Psoas muscle (tissue), 8 donors: ENCODE measurements at regions of chr18 and their contacts with region 1.

Region 1: DNA sequence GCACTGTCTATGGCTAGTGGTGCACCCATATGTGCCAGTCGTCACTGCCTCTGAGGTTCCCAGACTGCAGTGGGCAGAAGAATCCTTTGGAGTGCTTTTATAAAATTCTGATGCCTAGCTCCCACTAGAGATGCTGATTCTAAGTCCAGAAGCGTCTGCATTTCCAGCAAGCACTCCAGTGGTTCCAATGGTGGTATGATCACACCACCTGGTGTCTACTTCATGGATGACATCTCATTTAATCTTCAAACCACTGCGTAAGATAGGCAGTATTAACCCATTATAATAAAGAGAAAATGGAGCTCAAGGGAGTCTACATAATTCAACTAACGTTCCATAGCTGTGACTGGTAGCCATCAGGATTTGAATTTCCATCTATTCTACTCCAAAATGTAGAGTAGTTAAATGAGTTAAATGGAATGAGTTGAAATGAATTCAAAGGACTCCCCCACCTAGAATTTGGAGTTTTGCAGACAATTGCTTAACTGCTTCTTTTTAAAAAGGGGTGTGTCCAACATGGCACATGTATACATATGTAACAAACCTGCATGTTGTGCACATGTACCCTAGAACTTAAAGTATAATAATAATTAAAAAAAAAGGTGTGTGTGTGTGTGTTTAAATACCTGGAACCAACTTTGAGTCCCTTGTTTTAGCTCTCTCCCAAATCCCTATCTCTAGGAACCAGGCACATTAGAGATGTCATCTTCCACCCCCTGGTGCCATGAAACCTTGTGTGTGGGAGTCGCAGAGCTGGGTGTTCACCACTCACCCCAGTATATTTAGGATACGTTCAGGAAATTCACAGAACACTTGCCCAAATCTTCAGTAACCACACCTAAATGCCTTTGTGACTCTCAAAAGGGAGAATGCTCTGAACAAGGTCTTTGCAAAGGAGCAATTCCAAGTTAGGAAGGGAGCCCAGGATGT is 14.1 kb downstream of the LAMA3 start:
- DNase-seq: no peak
- ATAC-seq: peak in 1 of 4 donors; percentile 54
- H3K4me3 ChIP-seq: no peak overlapping the region
- H3K27ac ChIP-seq: no peak overlapping the region
- H3K4me1 ChIP-seq: no peaks in the 10 kb centered on the region
- H3K27me3 ChIP-seq: peaks cover 0 to 5% (median 0%) of the 10 kb centered on the region in 3 donors
- CTCF ChIP-seq: peak; percentile 52

Region 2: DNA sequence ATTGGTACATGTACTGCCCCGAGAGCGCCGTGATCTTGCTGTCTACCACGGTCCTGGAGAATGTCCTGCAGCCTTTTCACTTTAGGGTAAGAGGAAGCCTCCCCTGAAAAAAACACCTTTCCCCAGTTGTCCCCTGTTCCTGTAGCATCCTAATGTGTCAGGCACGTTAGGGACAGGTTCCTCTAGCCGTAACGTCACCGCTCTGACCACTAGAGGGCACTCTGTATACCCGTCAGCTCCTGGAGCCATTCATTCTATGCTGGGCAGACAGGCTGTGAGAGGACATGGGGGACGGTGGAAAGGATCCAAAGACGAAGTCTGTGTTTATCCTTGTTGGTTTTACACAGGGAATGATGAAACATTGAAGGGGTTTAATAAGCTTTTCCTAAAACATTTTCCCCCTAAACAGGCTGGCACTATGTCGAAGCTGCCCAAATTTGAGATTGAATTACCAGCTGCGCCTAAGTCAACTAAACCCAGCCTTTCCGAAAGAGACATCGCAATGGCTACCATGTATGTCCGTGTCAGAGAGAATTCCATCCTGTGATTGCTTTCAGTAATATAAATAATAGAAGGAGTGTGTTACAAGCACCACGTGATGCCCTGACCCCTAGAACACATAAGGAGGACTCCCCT is 187.3 kb before region 1 on chr18:
- intact Hi-C with region 1: loop called in 1 of 2 experiments (anchors 10 kb)
- DNase-seq: peak; percentile 48 to 74
- ATAC-seq: peak; percentile 87 to 96 (median 94)
- H3K4me3 ChIP-seq: no peak overlapping the region
- H3K27ac ChIP-seq: no peak overlapping the region
- H3K4me1 ChIP-seq: no peaks in the 10 kb centered on the region
- H3K27me3 ChIP-seq: no peaks in the 10 kb centered on the region
- CTCF ChIP-seq: peak; percentile 87

Region 3: DNA sequence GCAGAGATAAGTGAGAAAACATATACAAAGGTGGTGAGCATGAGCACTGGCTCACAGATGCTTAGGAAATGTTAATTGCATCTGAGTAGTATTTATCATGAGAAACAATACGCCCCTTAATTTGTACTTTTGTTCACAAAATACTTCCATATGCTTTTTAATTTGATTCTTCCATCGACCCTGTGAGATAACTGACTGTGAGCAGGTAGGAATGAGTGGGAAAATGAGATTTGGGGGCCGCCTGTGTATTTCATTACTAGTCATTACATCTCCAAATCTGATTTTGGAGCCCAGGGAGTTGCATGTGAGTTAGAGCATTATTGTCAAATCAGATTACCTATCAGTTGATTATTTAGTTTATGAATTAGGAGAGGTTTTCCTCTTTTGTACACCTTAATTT is 80.3 kb before region 1 on chr18:
- intact Hi-C with region 1: loop called in 1 of 2 experiments (anchors 2 kb)
- DNase-seq: no peak
- ATAC-seq: no peak
- H3K4me3 ChIP-seq: no peak overlapping the region
- H3K27ac ChIP-seq: no peak overlapping the region
- H3K4me1 ChIP-seq: peaks cover 18% of the 10 kb centered on the region
- H3K27me3 ChIP-seq: peaks cover 0 to 24% (median 5%) of the 10 kb centered on the region in 3 donors
- CTCF ChIP-seq: no peak

Region 4: DNA sequence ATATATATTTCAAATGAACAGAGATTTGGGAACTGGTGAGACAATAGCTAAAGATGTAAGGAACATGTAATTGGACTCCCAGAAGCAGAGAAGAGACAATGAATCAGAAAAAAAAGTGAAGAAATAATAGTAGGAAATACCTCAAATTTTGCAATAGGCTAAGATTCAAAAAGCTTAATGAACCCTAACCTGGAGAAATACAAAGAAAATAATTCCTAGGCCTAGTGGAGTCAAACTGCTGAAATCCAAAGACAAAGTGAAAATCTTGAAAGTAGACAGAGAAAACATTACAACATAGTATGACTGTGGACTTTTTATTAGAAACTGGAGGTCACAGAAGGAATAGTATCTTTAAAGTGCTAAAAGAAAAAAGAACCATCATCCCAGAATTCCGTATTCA is 62.6 kb after region 1 on chr18:
- intact Hi-C with region 1: no loop called
- DNase-seq: no peak
- ATAC-seq: no peak
- H3K4me3 ChIP-seq: no peak overlapping the region
- H3K27ac ChIP-seq: no peak overlapping the region
- H3K4me1 ChIP-seq: no peaks in the 10 kb centered on the region
- H3K27me3 ChIP-seq: no peaks in the 10 kb centered on the region
- CTCF ChIP-seq: no peak